Esophagus muscularis mucosa (tissue), 4 donors: ENCODE measurements at regions of chr19 and their contacts with region 1.

Region 1: DNA sequence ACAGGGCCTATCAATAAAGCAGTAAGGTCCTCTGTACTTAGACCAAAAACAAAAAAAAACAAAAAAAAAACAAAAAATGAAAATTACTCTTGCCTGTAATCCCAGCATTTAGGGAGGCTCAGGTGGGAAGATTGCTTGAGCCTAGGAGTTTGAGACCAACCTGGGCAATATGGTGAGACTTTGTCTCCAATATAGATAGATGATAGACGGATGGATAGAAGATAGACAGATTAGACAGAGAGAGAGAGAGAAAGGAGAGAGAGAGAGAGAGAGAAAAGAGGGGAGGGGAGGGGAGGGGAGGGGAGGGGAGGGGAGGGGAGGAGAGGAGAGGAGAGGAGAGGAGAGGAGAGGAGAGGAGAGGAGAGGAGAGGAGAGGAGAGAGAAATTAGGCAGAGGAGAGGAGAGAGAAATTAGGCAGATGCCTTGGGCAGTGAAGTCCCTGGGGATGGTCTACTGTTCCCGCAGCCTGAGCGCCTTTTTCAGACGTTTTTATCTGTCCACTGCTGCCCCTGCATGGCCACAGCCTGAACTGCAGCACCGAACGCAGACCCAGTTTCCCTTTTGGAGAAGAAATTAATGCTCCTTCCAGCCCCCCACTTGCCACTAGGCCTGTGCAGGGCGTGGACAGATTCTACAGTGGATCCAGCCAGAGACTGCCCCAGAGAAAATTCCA is 9.8 kb upstream of the ZNF627 start:
- DNase-seq: peak; percentile 93
- H3K4me3 ChIP-seq: no peak overlapping the region
- H3K27ac ChIP-seq: no peak overlapping the region
- H3K4me1 ChIP-seq: peaks cover 0 to 5% (median 2%) of the 10 kb centered on the region in 4 donors
- H3K27me3 ChIP-seq: no peaks in the 10 kb centered on the region
- CTCF ChIP-seq: peak; percentile 82 to 97 (median 91)
- EP300 ChIP-seq: no peak
- POLR2A ChIP-seq: no peak

Region 2: GRCh38 chr19:11496391-11497163 is 90.9 kb before region 1 on chr19:
- intact Hi-C with region 1: loop called (anchors 1 kb)
- DNase-seq: no peak
- H3K4me3 ChIP-seq: no peak overlapping the region
- H3K27ac ChIP-seq: no peak overlapping the region
- H3K4me1 ChIP-seq: peaks cover 0 to 5% (median 4%) of the 10 kb centered on the region in 4 donors
- H3K27me3 ChIP-seq: no peaks in the 10 kb centered on the region
- CTCF ChIP-seq: peak; percentile 53 to 74 (median 68)
- EP300 ChIP-seq: no peak
- POLR2A ChIP-seq: no peak